ENCODE measurements at regions of chr3 and their contacts with region 1.

Region 1: GRCh38 chr3:105518806-105519418 is 152.2 kb downstream of the ALCAM start:
- H3K4me3 Mint-ChIP-seq: no peak overlapping the region
- H3K27ac Mint-ChIP-seq: no peak overlapping the region
- H3K4me1 Mint-ChIP-seq: no peaks in the 10 kb centered on the region
- H3K27me3 Mint-ChIP-seq: no peaks in the 10 kb centered on the region

Region 2: GRCh38 chr3:104102386-104102785 is 1416.5 kb before region 1 on chr3:
- intact Hi-C with region 1: loop called (anchors 5 kb)
- H3K4me3 Mint-ChIP-seq: no peak overlapping the region
- H3K27ac Mint-ChIP-seq: no peak overlapping the region
- H3K4me1 Mint-ChIP-seq: no peaks in the 10 kb centered on the region
- H3K27me3 Mint-ChIP-seq: no peaks in the 10 kb centered on the region

Region 3: GRCh38 chr3:104273046-104273649 is 1245.8 kb before region 1 on chr3:
- intact Hi-C with region 1: loop called (anchors 5 kb)
- H3K4me3 Mint-ChIP-seq: no peak overlapping the region
- H3K27ac Mint-ChIP-seq: no peak overlapping the region
- H3K4me1 Mint-ChIP-seq: no peaks in the 10 kb centered on the region
- H3K27me3 Mint-ChIP-seq: no peaks in the 10 kb centered on the region

Region 4: DNA sequence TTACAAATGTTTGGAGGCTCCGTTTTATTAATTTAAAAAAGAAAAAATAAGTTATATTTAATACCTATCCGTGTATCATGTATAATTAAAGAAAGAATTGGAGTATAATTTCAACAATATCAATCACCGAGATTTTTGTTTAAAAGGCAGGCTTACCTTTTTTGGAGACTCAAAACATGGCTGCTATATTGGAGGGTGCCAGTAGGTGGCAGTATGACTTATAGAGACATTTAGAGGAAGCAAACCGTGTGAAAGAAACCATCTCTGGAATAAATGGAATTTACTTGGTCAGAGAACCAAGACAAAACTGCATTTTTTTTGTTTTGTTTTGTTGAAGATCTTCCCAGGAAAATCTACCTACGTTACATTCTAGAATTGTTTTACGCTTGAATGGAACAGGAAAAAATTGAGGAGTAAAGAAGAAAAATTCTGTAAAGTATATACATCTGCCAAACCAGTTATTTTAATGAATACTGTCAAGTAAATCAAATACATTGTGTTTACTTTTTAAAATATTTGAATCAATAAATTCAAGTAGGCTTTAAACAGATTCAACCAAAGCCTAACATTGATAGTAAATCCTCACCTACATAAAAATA is 954.8 kb before region 1 on chr3:
- intact Hi-C with region 1: loop called (anchors 2 kb)
- H3K4me3 Mint-ChIP-seq: no peak overlapping the region
- H3K27ac Mint-ChIP-seq: no peak overlapping the region
- H3K4me1 Mint-ChIP-seq: no peaks in the 10 kb centered on the region
- H3K27me3 Mint-ChIP-seq: no peaks in the 10 kb centered on the region

Region 5: GRCh38 chr3:104596551-104596950 is 922.4 kb before region 1 on chr3:
- intact Hi-C with region 1: loop called (anchors 10 kb)
- H3K4me3 Mint-ChIP-seq: no peak overlapping the region
- H3K27ac Mint-ChIP-seq: no peak overlapping the region
- H3K4me1 Mint-ChIP-seq: peaks cover 6% of the 10 kb centered on the region
- H3K27me3 Mint-ChIP-seq: no peaks in the 10 kb centered on the region

Region 6: GRCh38 chr3:105891101-105891500 is 372.2 kb after region 1 on chr3:
- intact Hi-C with region 1: no loop called
- H3K4me3 Mint-ChIP-seq: no peak overlapping the region
- H3K27ac Mint-ChIP-seq: peak overlapping the region; percentile 26
- H3K4me1 Mint-ChIP-seq: no peaks in the 10 kb centered on the region
- H3K27me3 Mint-ChIP-seq: no peaks in the 10 kb centered on the region